Calu3 (cell line): ENCODE measurements at regions of chr3 and their contacts with region 1.

Region 1: GRCh38 chr3:142447852-142448823 is at the start of gene XRN1:
- DNase-seq: peak; percentile 100
- H3K4me3 Mint-ChIP-seq: peak within 1 kb of the TSS; percentile 81
- H3K27ac Mint-ChIP-seq: peak within 1 kb of the TSS; percentile 87
- H3K4me1 Mint-ChIP-seq: peaks cover 15% of the 10 kb centered on the region
- H3K27me3 Mint-ChIP-seq: no peaks in the 10 kb centered on the region
- CTCF ChIP-seq: no peak
- total RNA-seq, gene XRN1: 59.7 and 64.1 TPM in 2 replicates

Region 2: DNA sequence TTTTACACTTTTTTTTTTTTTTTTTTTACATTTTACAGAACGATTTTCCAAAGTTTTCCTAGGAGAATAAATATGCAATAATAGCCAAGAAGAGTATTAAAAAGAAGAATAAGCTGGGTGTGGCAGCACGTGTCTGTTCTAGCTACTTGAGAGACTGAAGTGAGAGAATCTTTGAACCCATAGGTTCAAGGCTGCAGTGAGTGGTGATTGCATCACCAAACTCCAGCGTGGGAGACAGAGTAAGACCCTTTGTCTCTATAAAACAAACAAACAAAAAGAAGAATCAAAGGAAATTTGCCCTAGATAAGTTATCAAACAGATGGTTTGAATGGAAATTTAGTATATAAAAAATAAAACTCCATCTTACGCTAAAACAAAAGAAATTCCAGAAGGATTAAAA is 13.6 kb before region 1 on chr3:
- CTCF ChIA-PET with region 1: no interaction called
- intact Hi-C with region 1: loop called (anchors 1 kb)
- DNase-seq: no peak
- H3K4me3 Mint-ChIP-seq: no peak overlapping the region
- H3K27ac Mint-ChIP-seq: no peak overlapping the region
- H3K4me1 Mint-ChIP-seq: peaks cover 19% of the 10 kb centered on the region
- H3K27me3 Mint-ChIP-seq: no peaks in the 10 kb centered on the region
- CTCF ChIP-seq: no peak

Region 3: GRCh38 chr3:142549986-142550385 is 101.8 kb after region 1 on chr3:
- CTCF ChIA-PET with region 1: no interaction called
- intact Hi-C with region 1: no loop called
- DNase-seq: no peak
- H3K4me3 Mint-ChIP-seq: no peak overlapping the region
- H3K27ac Mint-ChIP-seq: no peak overlapping the region
- H3K4me1 Mint-ChIP-seq: no peaks in the 10 kb centered on the region
- H3K27me3 Mint-ChIP-seq: no peaks in the 10 kb centered on the region
- CTCF ChIP-seq: no peak